ENCODE measurements at regions of chr4 and their contacts with region 1.

Region 1: DNA sequence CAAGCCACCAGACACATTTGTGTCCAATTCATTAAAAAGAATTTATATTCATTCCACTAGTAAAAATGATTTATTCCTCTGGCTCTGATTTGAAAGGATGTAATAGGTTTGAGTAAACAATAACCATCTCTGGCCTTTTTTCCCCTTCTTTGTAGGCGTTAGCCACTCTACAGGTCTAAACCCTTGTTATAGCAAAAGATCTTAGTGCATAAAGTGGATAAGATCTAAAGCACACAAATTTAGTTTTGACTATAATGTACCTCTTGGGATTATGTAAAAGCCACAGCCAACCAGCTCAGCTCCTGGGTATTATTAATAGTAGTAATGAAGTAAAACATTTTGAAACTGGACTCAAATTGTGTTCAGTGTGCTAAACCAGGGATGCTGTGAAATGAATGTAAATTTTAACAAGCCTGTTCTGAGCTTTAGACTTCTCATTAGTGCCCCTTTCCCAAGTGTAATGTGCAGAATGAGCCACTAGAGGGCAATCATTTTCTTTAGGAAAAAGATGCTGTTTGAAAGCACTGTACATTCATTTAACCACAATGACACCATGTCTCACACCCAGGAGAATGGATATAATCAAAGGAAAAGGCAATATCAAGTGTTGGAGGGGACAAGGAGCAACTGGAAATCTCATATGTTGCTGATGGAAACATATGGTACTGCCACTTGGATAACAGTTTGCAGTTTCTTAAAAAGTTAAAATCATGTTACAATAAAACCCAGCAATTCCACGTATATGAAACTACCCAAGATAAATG is 69.7 kb downstream of the KLHL8 start:
- DNase-seq: peak; percentile 45
- CTCF ChIP-seq: peak; percentile 84

Region 2: GRCh38 chr4:87126000-87126399 is 24.7 kb before region 1 on chr4:
- CTCF ChIA-PET with region 1: interaction called, 11 read pairs
- POLR2A ChIA-PET with region 1: no interaction called
- DNase-seq: no peak
- CTCF ChIP-seq: no peak

Region 3: GRCh38 chr4:87166296-87166854 is 15.7 kb after region 1 on chr4:
- CTCF ChIA-PET with region 1: interaction called, 55 read pairs
- POLR2A ChIA-PET with region 1: no interaction called
- DNase-seq: no peak
- CTCF ChIP-seq: no peak

Region 4: DNA sequence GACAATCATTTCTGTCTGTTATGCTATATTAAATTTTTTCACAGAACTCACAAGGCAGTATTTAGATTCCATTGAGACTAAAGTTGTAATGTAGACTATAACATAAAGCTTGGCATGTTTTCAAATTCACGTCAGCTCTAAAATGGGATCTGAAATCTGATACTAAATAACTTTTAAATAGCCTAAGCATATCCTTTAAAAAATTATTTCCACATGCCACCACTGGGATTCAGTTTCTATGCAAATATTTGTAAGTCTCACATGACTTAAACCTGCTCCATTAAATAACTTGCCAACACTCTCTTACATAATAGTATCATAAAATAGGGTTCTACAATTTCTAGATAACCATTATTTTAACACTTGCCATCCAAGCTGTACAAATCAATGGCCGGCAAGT is 37.4 kb after region 1 on chr4:
- CTCF ChIA-PET with region 1: interaction called, 10 read pairs
- POLR2A ChIA-PET with region 1: no interaction called
- DNase-seq: no peak
- CTCF ChIP-seq: no peak

Region 5: DNA sequence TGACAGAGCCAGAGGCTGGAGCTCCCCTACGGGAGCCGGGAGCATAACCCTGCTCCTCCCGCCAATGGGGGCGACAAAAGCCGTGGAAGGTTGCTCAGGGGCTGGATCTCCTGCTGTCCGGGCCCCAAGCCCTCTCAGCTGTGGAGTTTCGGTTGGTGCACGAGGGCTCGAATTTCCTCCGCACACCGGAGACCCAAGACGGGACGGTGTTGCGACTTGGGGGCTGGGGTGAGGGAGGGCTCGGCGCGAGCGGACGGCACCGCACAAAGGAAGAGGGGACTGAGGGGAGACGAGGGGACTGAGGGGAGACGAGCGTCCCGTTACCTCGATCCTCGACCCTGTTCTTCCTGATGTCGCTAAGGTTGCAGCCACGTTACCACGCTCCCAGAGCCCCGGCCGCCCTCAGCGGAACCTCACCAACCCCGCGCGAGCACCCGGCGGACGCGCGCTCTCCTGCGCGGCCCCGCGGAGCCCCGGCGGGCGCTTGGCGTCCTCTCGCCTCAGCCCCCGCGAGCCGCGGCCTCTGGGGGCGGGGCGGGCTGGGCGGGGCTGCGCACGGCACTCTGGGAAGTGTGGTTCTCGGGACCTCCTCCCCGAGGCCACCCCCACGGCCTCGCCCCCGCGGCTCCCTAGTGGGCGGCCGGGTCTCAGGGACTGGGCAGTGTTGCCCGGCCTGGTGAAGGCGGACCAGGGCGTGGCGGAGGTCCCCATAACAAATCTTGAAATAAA is 69.6 kb after region 1 on chr4 and contains the start of gene KLHL8:
- CTCF ChIA-PET with region 1: interaction called, 26 read pairs
- POLR2A ChIA-PET with region 1: no interaction called
- DNase-seq: peak; percentile 96
- CTCF ChIP-seq: no peak

Region 6: GRCh38 chr4:87304671-87305432 is 154.2 kb after region 1 on chr4:
- CTCF ChIA-PET with region 1: no interaction called
- POLR2A ChIA-PET with region 1: no interaction called
- DNase-seq: no peak
- CTCF ChIP-seq: no peak

Measured in GM10248 (cell line).